ENCODE measurements at regions of chr12 and their contacts with region 1.

Region 1: DNA sequence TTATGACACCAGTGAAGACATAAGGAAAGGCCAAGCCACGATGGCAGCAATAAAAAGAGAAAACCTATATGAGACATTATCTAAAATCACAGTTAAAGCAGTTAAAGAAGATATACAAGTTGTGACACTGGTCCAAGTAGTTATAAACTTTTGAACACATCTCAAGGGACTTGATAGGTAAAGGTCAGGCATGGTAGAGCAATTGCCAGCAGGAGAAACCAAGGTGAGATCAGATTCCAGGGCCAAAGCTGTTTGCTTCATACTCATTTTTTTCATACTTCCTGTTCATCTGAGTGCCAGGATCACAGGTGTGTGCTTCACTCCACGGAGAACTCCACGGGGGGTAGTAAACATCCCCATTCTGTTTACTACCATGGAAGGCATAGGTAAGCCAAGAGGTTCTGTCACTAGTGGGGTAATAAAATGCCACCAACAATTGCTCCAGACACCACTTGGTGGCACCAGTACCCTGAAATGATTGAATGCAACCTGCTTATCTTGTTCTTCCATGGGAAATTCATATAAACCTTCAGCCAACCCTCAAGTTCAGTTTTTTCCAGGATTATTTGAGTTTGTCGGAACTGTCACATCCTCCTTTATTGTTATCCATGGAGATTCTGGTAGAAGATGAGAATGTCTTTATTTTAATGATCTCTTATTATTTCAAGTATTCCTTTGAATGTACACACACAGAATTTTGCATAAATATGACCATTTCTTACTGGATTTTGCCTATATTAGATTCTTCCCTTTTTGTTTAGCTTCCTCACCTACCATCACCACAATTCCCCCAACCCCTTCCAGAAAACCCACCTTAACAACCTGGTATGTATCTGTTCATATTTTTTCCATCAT is 59.2 kb upstream of the TSPAN8 start:
- DNase-seq: peak; percentile 79
- H3K4me3 ChIP-seq: no peak overlapping the region
- H3K27ac ChIP-seq: no peak overlapping the region
- H3K4me1 ChIP-seq: peaks cover 18% of the 10 kb centered on the region
- H3K27me3 ChIP-seq: no peaks in the 10 kb centered on the region
- CTCF ChIP-seq: peak; percentile 82

Region 2: GRCh38 chr12:71392521-71393145 is 175.7 kb after region 1 on chr12:
- CTCF ChIA-PET with region 1: interaction called, 4 read pairs
- POLR2A ChIA-PET with region 1: no interaction called
- intact Hi-C with region 1: loop called (anchors 1 kb)
- DNase-seq: peak; percentile 87
- H3K4me3 ChIP-seq: no peak overlapping the region
- H3K27ac ChIP-seq: no peak overlapping the region
- H3K4me1 ChIP-seq: peaks cover 17% of the 10 kb centered on the region
- H3K27me3 ChIP-seq: no peaks in the 10 kb centered on the region
- CTCF ChIP-seq: peak; percentile 91

Region 3: GRCh38 chr12:71551529-71551928 is 334.6 kb after region 1 on chr12:
- CTCF ChIA-PET with region 1: interaction called, 3 read pairs
- POLR2A ChIA-PET with region 1: no interaction called
- intact Hi-C with region 1: loop called (anchors 1 kb)
- DNase-seq: peak; percentile 58
- H3K4me3 ChIP-seq: no peak overlapping the region
- H3K27ac ChIP-seq: no peak overlapping the region
- H3K4me1 ChIP-seq: peaks cover 3% of the 10 kb centered on the region
- H3K27me3 ChIP-seq: no peaks in the 10 kb centered on the region
- CTCF ChIP-seq: peak; percentile 79

Region 4: DNA sequence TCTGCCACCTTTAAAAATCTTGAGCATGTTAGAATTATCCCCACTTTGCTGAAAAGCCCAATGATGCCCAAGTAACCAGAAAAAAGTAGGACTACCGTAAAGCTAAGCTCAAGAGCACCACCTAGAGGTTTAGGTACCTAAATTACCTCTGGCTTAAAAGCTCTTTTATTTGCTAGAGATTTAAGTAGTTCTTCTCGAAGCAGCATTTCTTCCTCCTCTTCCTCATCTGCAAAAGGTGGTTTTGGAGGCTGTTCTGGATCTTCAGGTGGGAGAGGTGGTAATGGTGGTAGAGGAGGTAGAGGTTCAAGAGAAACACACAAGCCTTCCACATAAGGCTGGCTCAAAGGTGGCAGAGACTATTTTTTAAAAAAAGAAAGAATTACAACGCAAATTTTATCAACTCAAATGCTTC is 419.8 kb after region 1 on chr12:
- CTCF ChIA-PET with region 1: interaction called, 4 read pairs
- POLR2A ChIA-PET with region 1: no interaction called
- intact Hi-C with region 1: loop called (anchors 5 kb)
- DNase-seq: peak; percentile 86
- H3K4me3 ChIP-seq: no peak overlapping the region
- H3K27ac ChIP-seq: no peak overlapping the region
- H3K4me1 ChIP-seq: peaks cover 3% of the 10 kb centered on the region
- H3K27me3 ChIP-seq: no peaks in the 10 kb centered on the region
- CTCF ChIP-seq: peak; percentile 87